Naive thymus-derived CD4-positive, alpha-beta T cell (primary cell): ENCODE measurements at regions of chr2 and their contacts with region 1.

Region 1: DNA sequence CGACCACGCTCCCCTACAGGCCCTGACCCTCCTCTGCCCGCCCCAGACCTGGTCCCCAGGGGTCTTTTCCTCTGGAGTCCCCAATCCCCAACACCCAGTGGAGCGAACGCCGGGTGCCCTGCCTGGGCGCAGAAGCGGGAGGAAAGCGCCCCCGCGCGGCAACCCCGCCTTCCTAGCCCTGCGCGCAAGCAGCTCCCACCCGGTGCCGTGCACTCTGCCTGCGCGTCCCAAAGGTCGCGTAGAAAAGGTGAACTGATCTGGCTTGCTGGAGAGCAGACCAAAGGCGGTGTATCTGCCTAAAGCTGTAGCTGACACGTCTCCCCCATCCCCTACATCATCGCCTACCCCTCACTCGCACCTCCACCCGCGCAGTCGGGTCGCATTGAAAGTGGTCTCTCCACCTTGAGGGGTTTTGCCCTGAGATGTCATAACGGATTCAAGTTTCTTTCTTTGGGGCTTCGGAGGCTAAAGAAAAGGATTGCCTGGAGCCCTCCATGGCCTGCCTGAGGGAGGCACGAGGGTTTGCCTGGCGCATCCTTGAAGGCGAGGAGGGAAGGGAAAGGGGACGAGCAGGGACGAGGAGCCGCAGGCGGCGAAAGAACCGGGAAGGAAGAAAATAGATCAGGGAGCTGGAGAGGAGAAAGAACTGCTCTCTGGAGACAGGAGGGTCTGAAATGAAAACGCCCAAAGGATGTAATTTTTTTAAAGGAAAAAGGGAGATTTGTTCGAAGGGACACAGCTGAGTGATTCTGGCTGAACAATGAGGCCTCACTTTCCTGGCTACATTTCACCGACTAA is 5.8 kb downstream of the GAD1 start:
- DNase-seq: peak in 4 of 9 donors; percentile 22 to 52 (median 35)
- ATAC-seq: peak; percentile 43
- H3K4me3 ChIP-seq: peak overlapping the region; percentile 57
- H3K4me3 Mint-ChIP-seq: peak overlapping the region; percentile 54 to 94 (median 81)
- H3K27ac ChIP-seq: no peak overlapping the region
- H3K27ac Mint-ChIP-seq: peak overlapping the region in 1 of 9 donors; percentile 14
- H3K4me1 ChIP-seq: peaks cover 35 to 47% of the 10 kb centered on the region in 2 donors
- H3K4me1 Mint-ChIP-seq: peaks cover 25 to 63% (median 47%) of the 10 kb centered on the region in 7 donors
- H3K27me3 ChIP-seq: peaks cover 21 to 33% of the 10 kb centered on the region in 2 donors
- H3K27me3 Mint-ChIP-seq: peaks cover 82 to 89% (median 88%) of the 10 kb centered on the region in 5 donors

Region 2: DNA sequence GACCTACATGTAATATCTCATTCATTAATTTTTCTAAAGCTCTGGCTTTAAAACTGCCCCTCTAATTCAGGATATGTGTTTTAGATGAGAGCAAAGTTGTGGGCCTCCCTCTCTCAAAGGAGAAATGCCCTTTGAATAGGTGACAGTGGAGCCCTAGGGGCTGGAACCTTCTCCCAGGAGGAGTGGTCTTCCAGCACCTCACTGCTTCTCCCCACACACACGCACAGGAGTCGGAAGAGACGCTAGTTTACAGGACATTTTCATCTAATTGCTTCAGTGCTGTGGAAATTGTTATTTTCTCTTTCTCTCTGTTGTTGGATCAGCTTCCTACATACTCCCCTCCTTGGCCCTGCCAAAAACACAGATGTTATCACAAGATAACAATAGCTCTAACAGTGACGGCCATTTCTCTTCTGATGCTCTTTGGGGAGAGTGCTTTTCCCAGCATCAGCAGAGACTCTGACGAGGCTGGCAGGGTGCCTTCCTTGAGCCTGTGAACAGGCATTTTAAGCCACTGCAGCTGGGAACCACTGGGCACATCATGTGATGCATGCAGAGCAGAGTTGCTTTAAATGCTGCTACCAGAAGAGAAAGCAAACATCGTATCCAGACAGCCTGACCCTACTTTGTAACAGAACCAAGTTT is 316.7 kb before region 1 on chr2:
- CTCF ChIA-PET with region 1: no interaction called
- POLR2A ChIA-PET with region 1: no interaction called
- intact Hi-C with region 1: loop called in 1 of 2 experiments (anchors 5 kb)
- DNase-seq: peak in 1 of 9 donors; percentile 10
- ATAC-seq: no peak
- H3K4me3 ChIP-seq: no peak overlapping the region
- H3K4me3 Mint-ChIP-seq: peak overlapping the region in 3 of 10 donors; percentile 14 to 56 (median 52)
- H3K27ac ChIP-seq: no peak overlapping the region
- H3K27ac Mint-ChIP-seq: peak overlapping the region in 1 of 9 donors; percentile 41
- H3K4me1 ChIP-seq: peaks cover 7 to 25% of the 10 kb centered on the region in 2 donors
- H3K4me1 Mint-ChIP-seq: peaks cover 11 to 43% (median 34%) of the 10 kb centered on the region in 7 donors
- H3K27me3 ChIP-seq: no peaks in the 10 kb centered on the region
- H3K27me3 Mint-ChIP-seq: peaks cover 12 to 54% (median 25%) of the 10 kb centered on the region in 5 donors